ENCODE measurements at regions of chr4 and their contacts with region 1.

Region 1: DNA sequence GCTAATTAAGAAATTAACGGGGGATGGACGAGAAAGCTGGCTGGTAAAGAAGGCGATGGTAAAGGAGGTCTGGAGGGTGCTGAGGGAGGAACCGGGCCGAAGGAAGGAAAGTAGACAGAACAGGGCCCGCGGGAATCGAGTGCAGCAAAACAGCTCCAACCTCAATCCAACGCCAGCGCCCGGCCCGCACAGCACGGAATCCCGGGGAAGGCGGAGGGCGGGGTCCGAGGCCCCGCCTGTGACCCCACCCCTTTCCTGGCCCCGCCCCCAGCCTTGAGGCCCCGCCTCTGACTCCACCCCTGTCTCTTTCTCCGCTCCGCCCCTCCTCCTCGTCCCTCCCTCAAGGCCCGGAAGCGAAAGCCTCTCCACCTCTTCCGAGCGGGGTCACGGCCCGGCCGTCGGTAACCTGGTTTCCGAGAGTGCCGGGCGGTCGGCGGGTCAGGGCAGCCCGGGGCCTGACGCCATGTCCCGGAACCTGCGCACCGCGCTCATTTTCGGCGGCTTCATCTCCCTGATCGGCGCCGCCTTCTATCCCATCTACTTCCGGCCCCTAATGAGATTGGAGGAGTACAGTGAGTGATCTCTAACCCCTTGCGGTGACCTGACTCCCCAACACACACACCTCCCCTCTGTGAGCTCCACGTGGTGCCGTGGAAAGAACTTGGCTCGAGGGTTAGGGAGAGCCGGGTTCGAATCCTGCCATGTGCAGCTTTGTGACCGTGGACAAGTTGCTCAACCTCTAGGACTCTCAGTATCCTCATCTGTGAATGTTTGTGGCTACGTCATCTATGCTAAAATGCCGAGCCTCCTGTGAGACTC is at the start of gene SMIM20:
- DNase-seq: peak; percentile 69 to 96
- H3K4me3 ChIP-seq: peak within 1 kb of the TSS; percentile 70 to 74
- H3K27ac ChIP-seq: peak within 1 kb of the TSS; percentile 83 to 84
- H3K4me1 ChIP-seq: peaks cover 0 to 9% of the 10 kb centered on the region in 2 donors
- H3K27me3 ChIP-seq: no peaks in the 10 kb centered on the region
- CTCF ChIP-seq: no peak
- total RNA-seq, gene SMIM20: 5.7 TPM

Region 2: GRCh38 chr4:25312496-25313200 is 601.4 kb before region 1 on chr4 and contains the start of gene ZCCHC4:
- intact Hi-C with region 1: loop called (anchors 10 kb)
- DNase-seq: peak; percentile 43 to 94
- H3K4me3 ChIP-seq: peak within 1 kb of the TSS; percentile 67 to 85
- H3K27ac ChIP-seq: peak within 1 kb of the TSS in 1 of 2 donors; percentile 78
- H3K4me1 ChIP-seq: peaks cover 0 to 6% of the 10 kb centered on the region in 2 donors
- H3K27me3 ChIP-seq: no peaks in the 10 kb centered on the region
- CTCF ChIP-seq: peak; percentile 78 to 99 (median 92)
- total RNA-seq, gene ZCCHC4: 1.7 TPM

Region 3: DNA sequence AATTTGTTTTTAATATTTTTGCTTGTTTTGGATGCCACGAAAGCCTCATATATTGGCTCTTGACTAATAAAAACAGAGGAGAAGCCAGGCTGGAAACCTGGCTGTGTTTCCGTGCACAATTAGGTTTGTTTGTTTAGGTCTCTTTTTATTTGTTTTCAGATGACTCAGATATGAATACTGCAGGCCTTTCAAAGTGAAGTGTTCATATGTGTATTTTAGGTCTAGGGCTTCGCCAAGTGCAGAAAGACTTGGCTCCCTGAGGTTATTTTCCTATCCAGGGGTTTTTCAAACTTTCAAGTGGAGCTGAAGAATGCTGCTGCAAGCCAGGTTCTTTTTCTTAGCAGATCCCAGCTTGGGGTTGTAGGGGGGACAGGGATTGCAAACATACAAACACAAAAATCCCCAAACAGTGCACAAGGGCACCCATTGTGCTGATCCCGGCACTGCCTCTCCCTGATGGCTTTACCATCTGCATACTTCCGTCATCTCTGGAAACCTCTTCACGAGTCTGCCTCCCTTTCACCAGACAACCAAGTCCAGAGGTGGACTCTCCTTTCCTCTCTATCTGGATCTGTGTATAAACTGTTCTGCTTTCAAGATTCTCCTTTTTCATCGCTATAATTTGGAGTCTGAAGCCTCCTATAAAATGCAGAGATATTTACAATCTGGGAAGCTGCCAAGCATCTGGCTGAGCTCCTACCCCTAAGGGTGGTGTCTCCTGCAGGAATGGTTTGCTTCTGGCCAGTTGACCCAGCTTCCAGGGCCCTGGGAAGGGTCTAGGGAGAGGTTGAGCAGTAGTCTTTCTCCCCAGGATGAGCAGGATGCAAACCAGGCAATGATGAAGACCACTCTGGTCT is 108.5 kb after region 1 on chr4:
- intact Hi-C with region 1: loop called (anchors 5 kb)
- DNase-seq: peak in 1 of 2 donors; percentile 87
- H3K4me3 ChIP-seq: peak overlapping the region in 1 of 2 donors; percentile 35
- H3K27ac ChIP-seq: peak overlapping the region; percentile 58 to 67
- H3K4me1 ChIP-seq: peaks cover 8 to 33% of the 10 kb centered on the region in 2 donors
- H3K27me3 ChIP-seq: no peaks in the 10 kb centered on the region
- CTCF ChIP-seq: no peak

Region 4: GRCh38 chr4:26860157-26860921 is 946.3 kb after region 1 on chr4 and contains the start of gene STIM2:
- intact Hi-C with region 1: loop called (anchors 2 kb)
- DNase-seq: peak; percentile 88 to 98
- H3K4me3 ChIP-seq: peak within 1 kb of the TSS; percentile 95 to 100
- H3K27ac ChIP-seq: peak within 1 kb of the TSS; percentile 92 to 98
- H3K4me1 ChIP-seq: peaks cover 7 to 20% of the 10 kb centered on the region in 2 donors
- H3K27me3 ChIP-seq: no peaks in the 10 kb centered on the region
- CTCF ChIP-seq: peak in 2 of 3 experiments; percentile 27 to 35
- total RNA-seq, gene STIM2: 17.2 TPM

Measured in ascending aorta (tissue), 2 donors.